Natural killer cell (primary cell): ENCODE measurements at regions of chr14 and their contacts with region 1.

Region 1: GRCh38 chr14:105581551-105582341 is 55.4 kb downstream of the TMEM121 start:
- DNase-seq: peak in 1 of 2 donors; percentile 6
- ATAC-seq: no peak
- H3K4me3 ChIP-seq: no peak overlapping the region
- H3K4me3 Mint-ChIP-seq: no peak overlapping the region
- H3K27ac ChIP-seq: peak overlapping the region; percentile 45
- H3K27ac Mint-ChIP-seq: no peak overlapping the region
- H3K4me1 ChIP-seq: peaks cover 25% of the 10 kb centered on the region
- H3K4me1 Mint-ChIP-seq: no peaks in the 10 kb centered on the region
- H3K27me3 ChIP-seq: no peaks in the 10 kb centered on the region
- H3K27me3 Mint-ChIP-seq: no peaks in the 10 kb centered on the region
- CTCF ChIP-seq: no peak

Region 2: DNA sequence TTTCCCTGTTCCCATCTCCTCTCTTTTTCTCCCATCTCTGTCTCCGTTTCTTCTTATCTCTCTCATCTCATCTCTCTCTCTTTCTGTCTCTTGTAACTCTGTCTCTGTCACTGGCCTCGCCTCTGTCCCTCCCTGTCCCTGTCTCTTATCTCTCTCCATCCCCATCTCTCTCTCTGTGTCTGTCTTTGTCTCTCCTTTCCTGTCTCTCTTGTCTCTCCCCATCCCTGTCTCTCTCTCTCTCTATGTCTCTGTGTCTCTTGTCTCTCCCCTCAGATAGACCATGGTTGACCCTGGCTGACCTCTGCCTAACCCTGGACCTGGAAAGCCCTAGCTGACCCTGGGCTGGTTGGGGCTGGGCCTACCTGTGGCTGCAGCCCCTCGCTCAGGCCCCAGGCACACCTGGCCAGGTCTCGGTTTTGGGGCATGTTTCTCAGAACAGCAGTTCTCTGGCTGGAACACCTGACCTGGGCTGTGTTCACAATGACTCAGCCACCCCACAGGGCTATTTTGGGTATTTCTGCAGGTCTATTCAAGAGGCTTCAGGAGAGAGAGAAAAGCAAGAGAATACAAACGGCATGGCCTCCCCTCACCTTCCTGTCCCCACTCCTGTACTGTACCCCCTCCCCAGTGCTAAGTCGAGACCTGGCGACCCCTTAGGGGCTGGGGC is 119.0 kb after region 1 on chr14:
- intact Hi-C with region 1: loop called (anchors 2 kb)
- DNase-seq: no peak
- ATAC-seq: no peak
- H3K4me3 ChIP-seq: no peak overlapping the region
- H3K4me3 Mint-ChIP-seq: no peak overlapping the region
- H3K27ac ChIP-seq: peak overlapping the region; percentile 13
- H3K27ac Mint-ChIP-seq: no peak overlapping the region
- H3K4me1 ChIP-seq: peaks cover 14% of the 10 kb centered on the region
- H3K4me1 Mint-ChIP-seq: no peaks in the 10 kb centered on the region
- H3K27me3 ChIP-seq: no peaks in the 10 kb centered on the region
- H3K27me3 Mint-ChIP-seq: peaks cover 0 to 2% of the 10 kb centered on the region in 2 donors
- CTCF ChIP-seq: no peak